Activated CD4-positive, alpha-beta T cell treated with anti-CD3 and anti-CD28 coated beads for 36 hours (primary cell): ENCODE measurements at regions of chr3 and their contacts with region 1.

Region 1: GRCh38 chr3:158845765-158846350 is 44.0 kb downstream of the MFSD1 start:
- DNase-seq: peak; percentile 48
- ATAC-seq: peak; percentile 71
- H3K4me3 Mint-ChIP-seq: no peak overlapping the region
- H3K27ac Mint-ChIP-seq: no peak overlapping the region
- H3K4me1 Mint-ChIP-seq: peaks cover 6% of the 10 kb centered on the region
- H3K27me3 Mint-ChIP-seq: peaks cover 2% of the 10 kb centered on the region

Region 2: GRCh38 chr3:158859362-158859761 is 13.5 kb after region 1 on chr3:
- CTCF ChIA-PET with region 1: interaction called, 13 read pairs
- POLR2A ChIA-PET with region 1: no interaction called
- intact Hi-C with region 1: no loop called
- DNase-seq: no peak
- ATAC-seq: no peak
- H3K4me3 Mint-ChIP-seq: no peak overlapping the region
- H3K27ac Mint-ChIP-seq: no peak overlapping the region
- H3K4me1 Mint-ChIP-seq: no peaks in the 10 kb centered on the region
- H3K27me3 Mint-ChIP-seq: no peaks in the 10 kb centered on the region

Region 3: DNA sequence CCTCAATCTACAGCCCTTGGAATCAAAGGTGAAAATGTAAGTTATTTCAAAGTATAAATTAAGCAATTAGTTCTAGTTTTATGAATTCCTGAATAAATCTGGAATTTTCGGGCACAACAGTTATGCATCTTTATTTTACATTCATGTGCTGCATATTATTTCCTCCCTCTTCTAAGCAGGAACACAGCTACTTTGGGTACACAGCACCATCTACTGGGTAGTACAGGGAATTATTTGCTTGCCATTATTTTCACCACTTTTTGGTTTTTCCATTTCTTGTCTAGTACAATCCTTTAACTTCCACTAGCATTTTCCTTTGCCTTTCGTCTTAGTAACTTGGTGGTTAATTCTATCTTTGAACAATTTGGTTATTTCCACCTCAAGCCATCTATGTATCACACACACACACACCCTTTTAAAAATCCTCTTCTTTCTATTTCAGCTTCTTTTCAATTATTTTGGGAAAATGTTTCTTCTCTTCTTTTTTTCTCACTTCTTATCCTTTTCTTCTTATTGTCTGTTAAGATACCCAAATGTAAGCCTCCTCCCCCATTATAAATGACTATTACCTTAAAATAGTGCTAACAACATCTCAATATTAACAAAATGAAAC is 407.0 kb after region 1 on chr3:
- CTCF ChIA-PET with region 1: interaction called, 11 read pairs
- POLR2A ChIA-PET with region 1: no interaction called
- intact Hi-C with region 1: no loop called
- DNase-seq: no peak
- ATAC-seq: no peak
- H3K4me3 Mint-ChIP-seq: no peak overlapping the region
- H3K27ac Mint-ChIP-seq: no peak overlapping the region
- H3K4me1 Mint-ChIP-seq: no peaks in the 10 kb centered on the region
- H3K27me3 Mint-ChIP-seq: peaks cover 8% of the 10 kb centered on the region

Region 4: DNA sequence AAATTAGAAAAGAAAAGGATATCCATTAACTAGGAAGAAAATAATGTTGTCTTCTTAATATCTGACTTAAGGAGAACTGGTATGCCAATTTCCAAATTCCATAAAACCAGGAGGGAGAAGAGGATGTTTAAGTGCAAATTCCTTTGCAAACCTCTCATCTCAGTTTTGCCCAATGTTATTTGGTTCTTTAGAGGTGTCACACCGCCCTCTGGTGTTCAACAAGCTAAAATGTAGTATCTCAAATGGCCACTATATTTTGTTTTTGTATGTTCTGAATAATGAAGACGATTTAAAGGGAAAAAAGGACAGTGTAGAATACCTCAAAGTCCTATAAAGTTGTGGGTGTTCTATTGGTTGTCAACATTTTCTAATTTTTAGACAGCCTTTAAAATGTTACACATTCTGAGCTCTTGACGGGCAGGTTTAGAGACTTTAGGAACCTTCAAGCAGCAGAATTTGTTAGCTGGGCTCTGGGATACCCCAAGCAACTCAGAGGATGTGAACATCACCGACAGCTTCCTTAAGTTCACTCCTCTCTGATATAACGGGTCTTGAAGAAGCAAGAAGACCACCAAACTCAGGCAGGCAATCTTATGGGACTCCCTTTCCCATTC is 414.3 kb after region 1 on chr3:
- CTCF ChIA-PET with region 1: interaction called, 58 read pairs
- POLR2A ChIA-PET with region 1: no interaction called
- intact Hi-C with region 1: loop called (anchors 1 kb)
- DNase-seq: peak; percentile 56
- ATAC-seq: no peak
- H3K4me3 Mint-ChIP-seq: no peak overlapping the region
- H3K27ac Mint-ChIP-seq: no peak overlapping the region
- H3K4me1 Mint-ChIP-seq: no peaks in the 10 kb centered on the region
- H3K27me3 Mint-ChIP-seq: peaks cover 3% of the 10 kb centered on the region

Region 5: GRCh38 chr3:159804726-159805410 is 959.0 kb after region 1 on chr3:
- CTCF ChIA-PET with region 1: interaction called, 5 read pairs
- POLR2A ChIA-PET with region 1: no interaction called
- intact Hi-C with region 1: loop called in 1 of 2 experiments (anchors 5 kb)
- DNase-seq: peak; percentile 61
- ATAC-seq: peak; percentile 65
- H3K4me3 Mint-ChIP-seq: no peak overlapping the region
- H3K27ac Mint-ChIP-seq: no peak overlapping the region
- H3K4me1 Mint-ChIP-seq: no peaks in the 10 kb centered on the region
- H3K27me3 Mint-ChIP-seq: peaks cover 10% of the 10 kb centered on the region

Region 6: DNA sequence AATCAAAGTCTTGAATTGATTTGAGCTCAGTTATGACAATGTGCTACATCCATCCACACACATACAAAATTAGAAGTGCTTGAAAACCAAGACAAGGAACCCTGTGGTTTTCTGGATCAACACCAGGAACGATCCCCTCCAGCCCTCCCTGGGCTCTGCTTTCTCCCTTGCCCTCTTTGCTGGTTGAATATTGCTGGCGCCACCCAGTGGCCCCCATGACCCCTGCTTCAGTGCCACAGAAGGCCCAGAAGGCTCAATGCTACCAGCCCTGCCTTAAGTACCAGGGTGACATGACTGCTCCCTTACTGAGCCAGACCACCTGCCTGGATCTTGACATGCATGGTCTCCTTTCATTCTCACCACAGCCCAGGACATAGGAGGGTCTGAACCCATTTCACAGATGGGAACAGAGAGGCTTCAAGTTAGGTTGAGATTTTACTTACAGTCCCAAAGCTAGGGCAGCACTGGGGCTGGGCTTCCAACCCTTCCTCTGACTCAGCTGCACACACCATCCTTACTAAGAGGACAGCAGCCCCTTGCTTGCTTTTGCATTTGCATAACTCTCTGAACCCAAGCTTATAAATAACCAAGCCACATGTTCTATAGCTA is 1157.8 kb after region 1 on chr3:
- CTCF ChIA-PET with region 1: no interaction called
- POLR2A ChIA-PET with region 1: no interaction called
- intact Hi-C with region 1: loop called in 1 of 2 experiments (anchors 10 kb)
- DNase-seq: peak; percentile 69
- ATAC-seq: peak; percentile 91
- H3K4me3 Mint-ChIP-seq: no peak overlapping the region
- H3K27ac Mint-ChIP-seq: no peak overlapping the region
- H3K4me1 Mint-ChIP-seq: no peaks in the 10 kb centered on the region
- H3K27me3 Mint-ChIP-seq: no peaks in the 10 kb centered on the region